Gastrocnemius medialis (tissue), 4 donors: ENCODE measurements at regions of chr7 and their contacts with region 1.

Region 1: GRCh38 chr7:16918288-16918895 is 36.6 kb upstream of the AGR3 start:
- DNase-seq: no peak
- ATAC-seq: no peak
- H3K4me3 ChIP-seq: no peak overlapping the region
- H3K27ac ChIP-seq: no peak overlapping the region
- H3K4me1 ChIP-seq: no peaks in the 10 kb centered on the region
- H3K27me3 ChIP-seq: no peaks in the 10 kb centered on the region
- CTCF ChIP-seq: peak; percentile 36 to 73 (median 45)
- POLR2A ChIP-seq: no peak

Region 2: DNA sequence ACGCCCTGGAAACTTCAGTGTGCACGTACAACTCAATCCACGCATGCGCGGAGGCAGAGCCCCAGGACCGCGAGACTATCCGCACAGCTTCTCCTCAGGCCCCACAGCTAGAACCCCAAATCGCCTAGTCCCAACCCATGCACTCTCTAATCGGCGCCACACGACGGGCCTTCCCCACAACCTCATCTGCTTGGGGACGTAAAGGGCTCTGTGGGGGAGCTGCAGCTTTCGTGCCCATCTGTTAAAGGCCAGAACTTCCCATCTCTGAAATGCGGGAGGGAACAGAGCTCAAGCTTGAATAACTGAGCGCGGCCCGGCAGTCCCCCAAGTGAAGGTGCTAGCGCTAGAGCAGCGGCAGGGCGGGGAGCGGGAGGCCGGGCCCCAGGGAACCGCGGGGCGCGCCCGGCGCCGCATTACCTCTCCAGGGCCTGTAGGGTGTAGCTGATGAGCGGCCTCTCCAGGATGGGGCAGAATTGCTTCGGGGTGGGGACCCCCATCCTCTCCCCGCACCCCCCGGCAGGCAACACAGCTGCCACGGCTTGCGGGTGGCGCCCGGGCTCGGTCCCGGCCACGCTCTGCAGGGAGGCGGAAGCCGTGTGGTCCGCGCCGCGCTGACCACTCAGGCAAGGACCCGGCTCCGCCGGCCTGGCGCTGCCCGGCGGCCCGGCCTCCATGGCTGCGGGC is 497.6 kb before region 1 on chr7:
- in situ Hi-C with region 1: loop called in 1 of 4 experiments (anchors 25 kb)
- intact Hi-C with region 1: no loop called
- DNase-seq: peak; percentile 66 to 74
- ATAC-seq: peak; percentile 88 to 89
- H3K4me3 ChIP-seq: peak overlapping the region; percentile 73 to 91 (median 84)
- H3K27ac ChIP-seq: peak overlapping the region; percentile 91 to 93 (median 92)
- H3K4me1 ChIP-seq: peaks cover 15% of the 10 kb centered on the region in 2 donors
- H3K27me3 ChIP-seq: no peaks in the 10 kb centered on the region
- CTCF ChIP-seq: peak in 4 of 5 experiments; percentile 4 to 44 (median 24)
- POLR2A ChIP-seq: peak; percentile 52 to 68

Region 3: GRCh38 chr7:16587790-16588189 is 330.6 kb before region 1 on chr7:
- in situ Hi-C with region 1: loop called in 1 of 4 experiments (anchors 25 kb)
- intact Hi-C with region 1: no loop called
- DNase-seq: no peak
- ATAC-seq: no peak
- H3K4me3 ChIP-seq: peak overlapping the region in 1 of 4 donors; percentile 13
- H3K27ac ChIP-seq: no peak overlapping the region
- H3K4me1 ChIP-seq: peaks cover 0 to 4% of the 10 kb centered on the region in 2 donors
- H3K27me3 ChIP-seq: no peaks in the 10 kb centered on the region
- CTCF ChIP-seq: no peak
- POLR2A ChIP-seq: no peak

Region 4: GRCh38 chr7:16604054-16604453 is 314.3 kb before region 1 on chr7:
- in situ Hi-C with region 1: loop called (anchors 10 to 25 kb)
- intact Hi-C with region 1: loop called (anchors 1 kb)
- DNase-seq: no peak
- ATAC-seq: no peak
- H3K4me3 ChIP-seq: no peak overlapping the region
- H3K27ac ChIP-seq: no peak overlapping the region
- H3K4me1 ChIP-seq: no peaks in the 10 kb centered on the region
- H3K27me3 ChIP-seq: no peaks in the 10 kb centered on the region
- CTCF ChIP-seq: peak in 3 of 5 experiments; percentile 5 to 47 (median 15)
- POLR2A ChIP-seq: no peak

Region 5: DNA sequence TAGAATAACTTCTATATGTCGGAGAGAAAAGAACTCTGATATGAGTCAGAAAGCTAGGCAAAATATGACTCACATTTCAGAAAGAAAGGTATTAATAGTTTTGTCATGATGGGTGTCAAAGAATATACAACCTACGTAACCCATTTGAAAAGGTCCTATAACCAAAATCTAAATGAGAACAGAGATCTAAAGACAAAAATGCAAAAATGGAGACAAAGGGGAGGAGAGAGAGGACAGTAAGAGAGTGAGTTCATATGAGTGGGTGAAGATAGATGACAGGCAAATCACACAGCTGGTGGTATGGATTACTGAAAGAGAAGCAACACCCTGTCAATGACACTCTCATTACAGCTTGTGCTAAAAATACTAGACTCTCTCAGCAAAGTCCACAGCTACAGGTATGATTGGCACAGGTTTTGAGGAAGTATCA is 298.4 kb before region 1 on chr7:
- in situ Hi-C with region 1: loop called in 1 of 4 experiments (anchors 25 kb)
- intact Hi-C with region 1: no loop called
- DNase-seq: no peak
- ATAC-seq: peak; percentile 83 to 98
- H3K4me3 ChIP-seq: no peak overlapping the region
- H3K27ac ChIP-seq: peak overlapping the region; percentile 11 to 61 (median 47)
- H3K4me1 ChIP-seq: peaks cover 11 to 12% of the 10 kb centered on the region in 2 donors
- H3K27me3 ChIP-seq: no peaks in the 10 kb centered on the region
- CTCF ChIP-seq: no peak
- POLR2A ChIP-seq: no peak

Region 6: GRCh38 chr7:16695621-16696237 is 222.7 kb before region 1 on chr7:
- in situ Hi-C with region 1: loop called in 2 of 4 experiments (anchors 25 kb)
- intact Hi-C with region 1: loop called (anchors 2 kb)
- DNase-seq: no peak
- ATAC-seq: no peak
- H3K4me3 ChIP-seq: no peak overlapping the region
- H3K27ac ChIP-seq: no peak overlapping the region
- H3K4me1 ChIP-seq: no peaks in the 10 kb centered on the region
- H3K27me3 ChIP-seq: no peaks in the 10 kb centered on the region
- CTCF ChIP-seq: peak in 4 of 5 experiments; percentile 14 to 48 (median 26)
- POLR2A ChIP-seq: no peak